ENCODE measurements at regions of chr2 and their contacts with region 1.

Region 1: GRCh38 chr2:136378712-136379595 is 261.0 kb upstream of the CXCR4 start:
- DNase-seq: peak; percentile 64
- H3K4me3 ChIP-seq: no peak overlapping the region
- H3K27ac ChIP-seq: no peak overlapping the region
- H3K4me1 ChIP-seq: peaks cover 7% of the 10 kb centered on the region
- H3K27me3 ChIP-seq: no peaks in the 10 kb centered on the region
- CTCF ChIP-seq: peak; percentile 68 to 77
- POLR2A ChIP-seq: no peak

Region 2: GRCh38 chr2:136013955-136014354 is 365.0 kb before region 1 on chr2:
- CTCF ChIA-PET with region 1: no interaction called
- POLR2A ChIA-PET with region 1: no interaction called
- dilution Hi-C with region 1: no loop called
- intact Hi-C with region 1: loop called (anchors 5 kb)
- DNase-seq: peak; percentile 74
- H3K4me3 ChIP-seq: no peak overlapping the region
- H3K27ac ChIP-seq: no peak overlapping the region
- H3K4me1 ChIP-seq: no peaks in the 10 kb centered on the region
- H3K27me3 ChIP-seq: peaks cover 15 to 22% of the 10 kb centered on the region in 2 experiments
- CTCF ChIP-seq: no peak
- POLR2A ChIP-seq: no peak

Region 3: GRCh38 chr2:136025057-136025973 is 353.6 kb before region 1 on chr2:
- CTCF ChIA-PET with region 1: no interaction called
- POLR2A ChIA-PET with region 1: no interaction called
- dilution Hi-C with region 1: no loop called
- intact Hi-C with region 1: loop called (anchors 5 kb)
- DNase-seq: peak; percentile 43
- H3K4me3 ChIP-seq: no peak overlapping the region
- H3K27ac ChIP-seq: no peak overlapping the region
- H3K4me1 ChIP-seq: no peaks in the 10 kb centered on the region
- H3K27me3 ChIP-seq: peaks cover 5 to 6% of the 10 kb centered on the region in 2 experiments
- CTCF ChIP-seq: no peak
- POLR2A ChIP-seq: no peak

Region 4: DNA sequence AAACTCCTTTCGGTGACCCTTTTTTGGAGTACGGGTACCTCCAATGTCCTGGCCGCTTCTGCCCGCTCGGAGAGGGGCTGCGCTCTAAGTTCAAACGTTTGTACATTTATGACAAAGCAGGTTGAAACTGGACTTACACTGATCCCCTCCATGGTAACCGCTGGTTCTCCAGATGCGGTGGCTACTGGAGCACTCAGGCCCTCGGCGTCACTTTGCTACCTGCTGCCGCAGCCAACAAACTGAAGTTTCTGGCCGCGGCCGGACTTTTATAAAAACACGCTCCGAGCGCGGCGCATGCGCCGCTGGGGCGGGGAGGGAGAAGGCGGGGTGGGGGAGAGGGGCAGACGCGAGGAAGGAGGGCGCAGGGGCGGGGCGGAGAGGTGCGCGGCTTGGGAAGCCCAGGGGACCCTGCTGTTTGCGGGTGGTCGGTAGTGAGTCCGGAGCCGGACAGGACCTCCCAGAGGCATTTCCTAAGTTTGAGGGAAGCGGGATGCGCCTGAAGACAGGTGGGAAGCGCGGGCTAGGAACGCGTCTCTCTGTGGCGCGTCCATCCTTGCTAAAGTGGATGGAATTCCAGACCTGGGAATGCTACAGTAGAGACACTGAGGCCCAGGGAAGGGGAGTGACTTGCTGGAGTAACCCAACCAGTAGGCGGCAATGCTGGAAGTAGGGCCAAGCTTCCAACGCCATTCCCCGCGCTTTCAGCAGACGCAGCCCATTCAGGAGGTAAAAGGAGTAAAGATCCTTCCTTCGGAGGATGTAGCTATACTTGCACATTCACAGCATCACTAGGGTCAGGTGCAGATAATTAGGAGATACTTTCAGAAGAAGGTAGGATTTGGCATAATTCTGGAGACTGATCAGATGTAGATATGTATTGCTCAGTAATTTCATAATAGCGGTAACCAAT is 260.8 kb before region 1 on chr2 and contains the start of gene CXCR4:
- CTCF ChIA-PET with region 1: no interaction called
- POLR2A ChIA-PET with region 1: no interaction called
- dilution Hi-C with region 1: no loop called
- intact Hi-C with region 1: loop called (anchors 1 kb)
- DNase-seq: peak; percentile 52
- H3K4me3 ChIP-seq: peak within 1 kb of the TSS; percentile 45 to 73 (median 69)
- H3K27ac ChIP-seq: no peak within 1 kb of the TSS
- H3K4me1 ChIP-seq: peaks cover 23% of the 10 kb centered on the region
- H3K27me3 ChIP-seq: peaks cover 48 to 73% of the 10 kb centered on the region in 2 experiments
- CTCF ChIP-seq: peak; percentile 16 to 32
- POLR2A ChIP-seq: peak; percentile 55
- total RNA-seq, gene CXCR4: 52.4 and 81.0 TPM in 2 replicates

Region 5: DNA sequence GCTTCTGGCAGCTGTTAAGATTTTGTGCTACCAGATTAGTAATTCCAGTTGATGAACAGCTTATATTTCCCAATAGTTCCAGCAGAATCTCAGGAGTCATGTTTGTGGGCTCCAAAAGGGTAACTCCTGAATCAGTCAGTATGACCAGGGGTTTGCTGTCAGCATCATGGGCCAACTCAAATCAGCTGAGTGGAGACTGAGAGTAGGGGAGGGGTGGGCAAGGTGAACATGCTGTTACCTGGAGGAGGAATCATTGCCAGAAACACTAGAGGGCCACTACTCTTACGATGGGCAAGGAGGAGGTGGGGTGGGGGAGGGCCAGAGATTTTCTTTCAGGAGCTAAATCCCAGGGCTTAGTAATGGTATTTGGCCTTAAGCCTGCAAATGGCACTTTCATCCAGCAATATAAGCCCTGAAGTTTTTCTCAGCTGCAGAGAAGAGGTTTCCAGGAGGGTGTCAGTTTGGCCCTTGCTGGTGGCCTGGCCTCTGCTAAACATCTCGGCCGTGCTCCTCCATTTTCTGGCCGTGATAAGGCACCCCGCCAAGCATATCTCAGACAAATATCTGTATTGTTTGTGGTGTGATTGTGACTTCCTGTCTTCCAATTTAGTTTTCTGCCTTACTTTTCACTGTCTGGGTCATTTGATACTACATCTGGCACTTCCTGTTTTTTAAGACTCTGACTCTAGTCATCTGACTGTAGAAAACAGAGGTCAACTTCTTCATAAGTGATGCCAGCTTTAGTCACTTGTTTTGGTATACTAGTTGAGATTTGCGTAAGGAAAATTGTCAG is 140.5 kb before region 1 on chr2:
- CTCF ChIA-PET with region 1: no interaction called
- POLR2A ChIA-PET with region 1: no interaction called
- dilution Hi-C with region 1: no loop called
- intact Hi-C with region 1: loop called (anchors 1 kb)
- DNase-seq: peak; percentile 89
- H3K4me3 ChIP-seq: no peak overlapping the region
- H3K27ac ChIP-seq: peak overlapping the region; percentile 96
- H3K4me1 ChIP-seq: peaks cover 70% of the 10 kb centered on the region
- H3K27me3 ChIP-seq: no peaks in the 10 kb centered on the region
- CTCF ChIP-seq: no peak
- POLR2A ChIP-seq: peak; percentile 58